Activated naive CD4-positive, alpha-beta T cell treated with anti-CD3 and anti-CD28 coated beads, Interleukin-2, amount 10 ng/mL, durations not matched to agents 7 days and 5 days (primary cell): ENCODE measurements at regions of chr11 and their contacts with region 1.

Region 1: DNA sequence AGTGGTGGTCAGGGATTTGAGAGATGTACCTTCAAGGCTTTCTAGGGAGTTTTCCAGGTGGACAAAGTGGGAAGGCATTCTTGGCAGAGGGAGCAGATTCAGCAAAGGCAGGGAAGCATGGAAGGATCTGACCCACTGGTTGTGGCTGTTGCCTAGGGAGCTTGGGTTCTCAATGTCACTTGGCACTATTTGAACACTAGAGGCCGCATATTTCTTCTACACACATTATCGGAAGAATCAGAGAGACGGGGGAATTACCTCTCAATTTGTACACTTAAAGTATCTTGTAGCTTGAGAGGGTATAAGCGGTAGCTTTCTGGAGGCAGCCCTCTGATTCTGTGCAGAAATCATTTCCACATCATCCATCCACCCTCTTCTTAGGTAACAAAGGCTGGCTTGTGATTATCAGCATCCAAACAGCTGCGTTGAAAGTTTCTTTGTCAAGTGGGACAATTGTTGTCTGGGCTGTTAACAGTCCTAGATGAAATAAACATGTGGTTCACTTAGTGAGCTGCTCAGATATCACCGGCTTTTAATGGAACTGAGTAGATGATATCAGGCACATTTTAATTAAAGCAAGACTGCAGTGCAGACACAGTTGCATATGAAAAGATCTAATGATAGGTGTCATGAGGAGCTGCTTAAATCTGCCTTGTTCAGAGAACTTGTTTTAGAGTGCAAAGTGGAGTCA is 2.6 kb downstream of the NELL1 start:
- DNase-seq: no peak
- H3K4me3 Mint-ChIP-seq: no peak overlapping the region
- H3K27ac Mint-ChIP-seq: no peak overlapping the region
- H3K4me1 Mint-ChIP-seq: peaks cover 7% of the 10 kb centered on the region
- H3K27me3 Mint-ChIP-seq: peaks cover 59% of the 10 kb centered on the region

Region 2: GRCh38 chr11:20647976-20648565 is 23.9 kb before region 1 on chr11:
- CTCF ChIA-PET with region 1: interaction called, 18 read pairs
- DNase-seq: peak; percentile 47
- H3K4me3 Mint-ChIP-seq: no peak overlapping the region
- H3K27ac Mint-ChIP-seq: no peak overlapping the region
- H3K4me1 Mint-ChIP-seq: no peaks in the 10 kb centered on the region
- H3K27me3 Mint-ChIP-seq: peaks cover under 1% of the 10 kb centered on the region